ENCODE measurements at regions of chr22 and their contacts with region 1.

Region 1: DNA sequence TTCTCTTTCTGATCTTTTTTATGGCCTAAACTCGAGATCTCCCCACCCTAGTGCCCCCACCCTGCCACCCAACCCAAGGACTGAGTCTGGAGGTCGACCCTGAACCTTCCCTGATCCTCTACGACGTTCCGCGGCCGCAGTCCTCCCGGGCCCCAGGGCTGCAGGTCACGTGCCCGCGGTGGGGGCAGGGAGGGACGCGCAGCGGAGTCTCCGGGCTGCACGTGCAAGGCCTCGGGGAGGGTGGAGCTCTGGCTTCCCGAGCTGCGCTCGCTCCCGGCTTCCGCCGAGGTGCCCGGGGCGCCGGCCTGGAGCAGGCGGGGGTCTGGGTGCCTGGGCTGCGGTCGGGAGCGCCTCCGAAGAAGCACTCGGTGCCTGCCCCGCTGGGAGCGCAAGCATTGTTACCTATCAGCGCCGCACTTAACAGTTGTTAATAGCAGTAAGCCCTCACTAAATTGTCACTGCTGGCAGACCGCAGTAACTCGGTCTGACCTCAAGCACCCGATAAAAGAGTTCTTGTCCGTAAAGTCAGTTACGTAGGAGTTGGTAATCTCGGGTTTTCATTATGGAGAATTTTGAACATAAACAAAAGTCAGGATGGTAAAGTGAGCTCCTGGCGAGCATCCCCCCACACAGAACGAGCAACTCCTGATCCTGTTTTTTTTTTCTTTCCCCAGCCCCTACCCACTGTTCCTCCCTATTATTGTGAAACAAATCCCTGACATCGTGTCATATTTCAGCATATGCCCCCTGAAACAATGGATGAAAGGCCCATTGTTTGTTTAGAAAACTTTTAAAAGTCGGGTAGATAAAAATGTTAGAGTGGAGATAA is 69.7 kb upstream of the EP300 start:
- DNase-seq: peak; percentile 74
- ATAC-seq: peak; percentile 61
- H3K4me3 ChIP-seq: peak overlapping the region; percentile 76
- H3K27ac ChIP-seq: peak overlapping the region; percentile 84
- H3K4me1 ChIP-seq: peaks cover 12% of the 10 kb centered on the region
- H3K27me3 ChIP-seq: no peaks in the 10 kb centered on the region
- CTCF ChIP-seq: no peak

Region 2: GRCh38 chr22:40818747-40819598 is 203.7 kb before region 1 on chr22 and contains the start of gene SLC25A17:
- CTCF ChIA-PET with region 1: no interaction called
- POLR2A ChIA-PET with region 1: interaction called, 10 read pairs
- intact Hi-C with region 1: no loop called
- DNase-seq: peak; percentile 79
- ATAC-seq: peak; percentile 97
- H3K4me3 ChIP-seq: peak within 1 kb of the TSS; percentile 94
- H3K27ac ChIP-seq: peak within 1 kb of the TSS; percentile 66
- H3K4me1 ChIP-seq: peaks cover 21% of the 10 kb centered on the region
- H3K27me3 ChIP-seq: no peaks in the 10 kb centered on the region
- CTCF ChIP-seq: peak; percentile 37; the same call in 1 of the 2 replicates
- total RNA-seq, gene SLC25A17: 18.3 and 24.7 TPM in 2 replicates

Region 3: GRCh38 chr22:40856513-40857308 is 166.0 kb before region 1 on chr22 and contains the starts of genes ST13 and XPNPEP3:
- CTCF ChIA-PET with region 1: no interaction called
- POLR2A ChIA-PET with region 1: interaction called, 34 read pairs
- intact Hi-C with region 1: no loop called
- DNase-seq: peak; percentile 90
- ATAC-seq: peak; percentile 95
- H3K4me3 ChIP-seq: peak within 1 kb of the TSS; percentile 82
- H3K27ac ChIP-seq: peak within 1 kb of the TSS; percentile 96
- H3K4me1 ChIP-seq: peaks cover 33% of the 10 kb centered on the region
- H3K27me3 ChIP-seq: no peaks in the 10 kb centered on the region
- CTCF ChIP-seq: peak; percentile 22; the same call in 1 of the 2 replicates
- total RNA-seq, gene ST13: 136 and 143 TPM in 2 replicates
- total RNA-seq, gene XPNPEP3: 7.9 and 8.5 TPM in 2 replicates

Region 4: DNA sequence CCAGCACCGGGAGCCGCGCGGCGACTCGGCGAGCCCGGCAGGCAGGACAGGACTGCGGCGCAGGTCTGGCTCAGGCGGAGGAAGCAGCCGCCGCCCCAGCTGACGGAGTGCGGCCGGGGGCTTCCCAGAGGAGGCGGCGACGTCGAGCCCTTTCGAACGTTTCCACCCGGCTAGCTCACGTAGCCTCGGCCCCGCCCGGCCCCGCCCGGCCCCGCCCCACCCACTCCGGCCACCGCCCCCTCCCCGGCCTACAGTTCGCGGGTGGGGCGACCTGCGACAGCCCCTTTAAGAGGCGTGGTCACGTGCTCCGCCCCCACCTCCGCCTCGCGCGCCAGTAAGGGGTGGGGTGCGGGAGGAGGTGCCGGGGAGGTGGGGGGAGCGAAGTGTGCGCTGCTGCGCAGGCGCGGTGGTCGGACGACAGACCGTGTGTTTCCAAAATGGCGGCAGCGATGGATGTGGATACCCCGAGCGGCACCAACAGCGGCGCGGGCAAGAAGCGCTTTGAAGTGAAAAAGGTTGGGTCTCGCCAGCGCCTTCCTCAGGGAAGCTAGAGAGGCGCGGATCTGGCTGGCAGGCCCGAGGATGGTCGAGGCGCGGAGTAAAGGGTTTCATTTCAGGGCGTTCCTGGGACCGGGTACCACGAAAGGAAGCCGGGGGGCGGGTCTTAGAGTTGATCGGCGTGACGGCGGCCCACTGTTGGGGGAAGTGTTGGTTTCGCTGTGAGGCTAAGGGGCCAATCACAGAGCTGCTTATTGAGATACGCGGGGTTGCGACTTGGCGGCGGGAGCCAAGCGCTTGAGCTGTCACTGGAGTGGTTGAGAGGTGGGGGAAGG is 71.5 kb before region 1 on chr22 and contains the start of gene RBX1:
- CTCF ChIA-PET with region 1: interaction called, 9 read pairs
- POLR2A ChIA-PET with region 1: interaction called, 10 read pairs
- intact Hi-C with region 1: loop called (anchors 5 kb)
- DNase-seq: peak; percentile 94
- ATAC-seq: peak; percentile 86
- H3K4me3 ChIP-seq: peak within 1 kb of the TSS; percentile 94
- H3K27ac ChIP-seq: peak within 1 kb of the TSS; percentile 75
- H3K4me1 ChIP-seq: no peaks in the 10 kb centered on the region
- H3K27me3 ChIP-seq: no peaks in the 10 kb centered on the region
- CTCF ChIP-seq: no peak
- total RNA-seq, gene RBX1: 55.0 TPM in 2 replicates

Region 5: DNA sequence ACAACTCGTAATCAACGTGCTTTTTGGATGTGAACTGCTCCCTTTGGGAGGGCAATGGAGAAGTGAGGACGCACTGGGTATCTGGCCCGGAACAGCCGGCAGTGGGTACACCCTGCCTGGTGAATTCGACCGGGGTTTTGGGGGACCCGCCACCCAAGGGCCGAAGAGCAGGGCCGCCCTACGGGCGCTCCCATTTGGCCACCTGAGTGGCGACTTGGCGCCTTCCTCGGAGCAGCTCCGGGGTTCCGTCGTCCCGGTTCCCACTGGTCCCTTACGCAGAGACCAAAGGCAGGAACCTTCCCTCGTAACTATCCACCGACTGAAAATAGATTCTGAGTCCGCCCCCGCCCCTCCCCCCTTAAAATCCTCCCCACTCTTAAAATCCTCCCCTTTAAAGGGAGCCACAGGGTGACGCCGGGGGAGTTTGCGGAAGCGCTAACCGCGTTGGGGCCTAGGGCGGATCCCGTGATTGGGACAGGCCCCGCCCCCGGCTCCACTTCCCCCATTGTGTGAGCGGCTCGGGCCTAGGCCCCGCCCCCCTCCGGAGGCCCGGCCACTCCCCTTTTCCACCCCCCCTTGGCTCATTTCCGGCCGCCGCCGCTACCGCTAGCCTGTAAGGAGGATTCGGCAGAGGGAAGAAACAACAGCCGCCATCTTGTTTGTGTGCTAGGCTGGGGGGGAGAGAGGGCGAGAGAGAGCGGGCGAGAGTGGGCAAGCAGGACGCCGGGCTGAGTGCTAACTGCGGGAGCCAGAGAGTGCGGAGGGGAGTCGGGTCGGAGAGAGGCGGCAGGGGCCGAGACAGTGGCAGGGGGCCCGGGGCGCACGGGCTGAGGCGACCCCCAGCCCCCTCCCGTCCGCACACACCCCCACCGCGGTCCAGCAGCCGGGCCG is 68.7 kb after region 1 on chr22:
- CTCF ChIA-PET with region 1: no interaction called
- POLR2A ChIA-PET with region 1: no interaction called
- intact Hi-C with region 1: loop called (anchors 2 kb)
- DNase-seq: peak; percentile 95
- ATAC-seq: peak; percentile 89
- H3K4me3 ChIP-seq: peak overlapping the region; percentile 92
- H3K27ac ChIP-seq: peak overlapping the region; percentile 94
- H3K4me1 ChIP-seq: peaks cover 7% of the 10 kb centered on the region
- H3K27me3 ChIP-seq: no peaks in the 10 kb centered on the region
- CTCF ChIP-seq: no peak

Region 6: GRCh38 chr22:41526837-41527799 is 504.4 kb after region 1 on chr22:
- CTCF ChIA-PET with region 1: no interaction called
- POLR2A ChIA-PET with region 1: no interaction called
- intact Hi-C with region 1: no loop called
- DNase-seq: peak; percentile 33
- ATAC-seq: peak; percentile 54
- H3K4me3 ChIP-seq: no peak overlapping the region
- H3K27ac ChIP-seq: no peak overlapping the region
- H3K4me1 ChIP-seq: no peaks in the 10 kb centered on the region
- H3K27me3 ChIP-seq: no peaks in the 10 kb centered on the region
- CTCF ChIP-seq: peak; percentile 85

Measured in PC-3 (cell line).